ENCODE measurements at regions of chr1 and their contacts with region 1.

Region 1: DNA sequence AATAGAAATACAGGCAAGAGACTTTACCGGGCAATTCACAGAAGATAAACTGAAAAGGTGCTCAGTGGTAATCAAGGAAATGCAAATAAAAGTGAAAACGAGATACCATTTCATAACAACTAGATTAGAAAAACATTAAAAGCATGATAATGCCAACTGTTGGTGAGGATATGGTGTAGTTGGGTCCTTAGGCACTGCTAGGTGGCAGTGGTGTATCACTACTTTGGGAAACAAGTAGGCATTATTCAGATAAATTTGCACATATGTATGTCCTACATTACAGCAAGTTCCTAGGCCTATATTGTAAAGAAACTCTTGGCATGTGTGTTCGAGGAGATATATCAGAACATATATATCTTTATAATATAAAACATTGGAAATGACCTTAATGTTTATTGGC is 31.0 kb downstream of the AZIN2 start:
- DNase-seq: no peak
- H3K4me3 ChIP-seq: no peak overlapping the region
- H3K27ac ChIP-seq: no peak overlapping the region
- H3K4me1 ChIP-seq: no peaks in the 10 kb centered on the region
- H3K27me3 ChIP-seq: 0 out of 7 replicates have a peak, but pooled peaks cover 0 to 2% (median 0%) of the 10 kb centered on the region in 4 experiments
- CTCF ChIP-seq: peak in 2 of 3 experiments; percentile 6 to 51; a peak in 2 of 4 replicates
- EP300 ChIP-seq: no peak
- POLR2A ChIP-seq: no peak
- RAD21 ChIP-seq: peak; percentile 44 to 56; a peak in 3 of 4 replicates

Region 2: DNA sequence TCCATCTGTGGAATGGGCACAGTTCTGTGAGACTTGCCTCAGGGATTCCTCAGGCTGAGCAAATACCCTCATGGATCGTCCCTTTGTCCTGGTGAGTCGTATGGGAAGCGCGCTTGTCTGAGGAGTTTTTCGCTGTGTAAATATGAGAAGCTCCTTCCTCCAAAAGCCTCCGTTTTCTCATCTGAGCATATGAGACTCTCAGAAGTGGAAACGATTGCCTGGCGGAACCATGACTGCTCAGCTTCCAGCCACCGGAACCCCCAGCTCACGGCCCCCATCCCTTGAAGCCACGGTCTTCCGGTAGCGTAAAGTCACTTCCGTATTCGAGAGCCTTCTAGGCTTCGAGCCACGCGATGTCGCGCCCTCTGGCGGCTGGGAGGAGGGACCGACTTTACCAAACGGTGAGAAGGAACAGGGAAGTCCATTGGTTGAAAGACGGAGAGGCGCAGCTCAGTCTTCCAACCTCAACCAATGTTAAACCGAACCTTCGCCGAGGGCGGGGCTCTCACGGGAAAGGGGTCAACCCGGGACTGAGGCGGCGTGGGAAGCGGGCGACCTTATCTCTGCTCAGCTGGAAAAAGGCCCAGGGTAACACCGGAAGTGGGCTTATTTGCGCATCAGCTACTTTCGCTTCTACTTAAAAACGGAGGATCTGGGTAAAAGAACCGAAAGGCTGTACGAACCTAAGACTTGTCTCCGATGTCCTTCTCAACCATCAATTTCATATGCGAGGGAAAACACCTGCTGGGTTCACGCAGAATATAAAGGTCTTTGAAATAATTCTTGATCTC is 15.2 kb after region 1 on chr1:
- CTCF ChIA-PET with region 1: interaction called, 16 read pairs
- POLR2A ChIA-PET with region 1: interaction called, 3 read pairs
- DNase-seq: peak; percentile 92 to 93
- H3K4me3 ChIP-seq: peak overlapping the region; percentile 72 to 93 (median 88)
- H3K27ac ChIP-seq: peak overlapping the region; percentile 68
- H3K4me1 ChIP-seq: peaks cover 0 to 7% (median 2%) of the 10 kb centered on the region in 4 experiments; a peak in 6 of 7 replicates
- H3K27me3 ChIP-seq: peaks cover 0 to 6% (median 4%) of the 10 kb centered on the region in 4 experiments; a peak in 5 of 7 replicates
- CTCF ChIP-seq: peak; percentile 81 to 99 (median 93)
- EP300 ChIP-seq: 0 out of 3 replicates have a peak, but pooled peaks of 1 of the 2 experiments have one; percentile 37
- POLR2A ChIP-seq: peak; percentile 71 to 88
- RAD21 ChIP-seq: peak in 1 of 2 experiments; percentile 34; a peak in 3 of 4 replicates